ENCODE measurements at regions of chr19 and their contacts with region 1.

Region 1: GRCh38 chr19:34345947-34346351 is 19.0 kb upstream of the GPI start:
- DNase-seq: peak; percentile 85
- ATAC-seq: peak; percentile 24
- H3K4me3 Mint-ChIP-seq: no peak overlapping the region
- H3K27ac Mint-ChIP-seq: peak overlapping the region; percentile 70
- H3K4me1 Mint-ChIP-seq: peaks cover 19% of the 10 kb centered on the region
- H3K27me3 Mint-ChIP-seq: no peaks in the 10 kb centered on the region

Region 2: GRCh38 chr19:34041925-34042521 is 303.9 kb before region 1 on chr19:
- CTCF ChIA-PET with region 1: interaction called, 4 read pairs
- POLR2A ChIA-PET with region 1: no interaction called
- intact Hi-C with region 1: loop called (anchors 2 to 10 kb)
- DNase-seq: peak; percentile 91
- ATAC-seq: peak; percentile 71
- H3K4me3 Mint-ChIP-seq: no peak overlapping the region
- H3K27ac Mint-ChIP-seq: no peak overlapping the region
- H3K4me1 Mint-ChIP-seq: peaks cover 3% of the 10 kb centered on the region
- H3K27me3 Mint-ChIP-seq: peaks cover 10% of the 10 kb centered on the region

Region 3: GRCh38 chr19:34120846-34121639 is 224.9 kb before region 1 on chr19:
- CTCF ChIA-PET with region 1: interaction called, 3 read pairs
- POLR2A ChIA-PET with region 1: interaction called, 3 read pairs
- intact Hi-C with region 1: loop called in 1 of 2 experiments (anchors 5 kb)
- DNase-seq: peak; percentile 78
- ATAC-seq: peak; percentile 84
- H3K4me3 Mint-ChIP-seq: no peak overlapping the region
- H3K27ac Mint-ChIP-seq: no peak overlapping the region
- H3K4me1 Mint-ChIP-seq: peaks cover 20% of the 10 kb centered on the region
- H3K27me3 Mint-ChIP-seq: no peaks in the 10 kb centered on the region

Region 4: GRCh38 chr19:34232566-34233481 is 113.1 kb before region 1 on chr19:
- CTCF ChIA-PET with region 1: interaction called, 5 read pairs
- POLR2A ChIA-PET with region 1: no interaction called
- intact Hi-C with region 1: loop called (anchors 5 kb)
- DNase-seq: peak; percentile 53
- ATAC-seq: peak; percentile 87
- H3K4me3 Mint-ChIP-seq: no peak overlapping the region
- H3K27ac Mint-ChIP-seq: peak overlapping the region; percentile 80
- H3K4me1 Mint-ChIP-seq: peaks cover 31% of the 10 kb centered on the region
- H3K27me3 Mint-ChIP-seq: no peaks in the 10 kb centered on the region